ENCODE measurements at regions of chr9 and their contacts with region 1.

Region 1: GRCh38 chr9:107976765-107977164 is 487.2 kb upstream of the KLF4 start:
- DNase-seq: peak; percentile 18 to 82 (median 71)
- ATAC-seq: peak; percentile 77 to 98 (median 94)
- H3K4me3 ChIP-seq: no peak overlapping the region
- H3K27ac ChIP-seq: peak overlapping the region in 1 of 12 donors; percentile 13
- H3K4me1 ChIP-seq: peaks cover 0 to 17% (median 0%) of the 10 kb centered on the region in 12 donors
- H3K27me3 ChIP-seq: no peaks in the 10 kb centered on the region
- CTCF ChIP-seq: no peak
- POLR2A ChIP-seq: no peak

Region 2: GRCh38 chr9:107794259-107794658 is 182.5 kb before region 1 on chr9:
- intact Hi-C with region 1: no loop called
- DNase-seq: no peak
- ATAC-seq: no peak
- H3K4me3 ChIP-seq: no peak overlapping the region
- H3K27ac ChIP-seq: no peak overlapping the region
- H3K4me1 ChIP-seq: peaks cover 0 to 3% (median 0%) of the 10 kb centered on the region in 12 donors
- H3K27me3 ChIP-seq: no peaks in the 10 kb centered on the region
- CTCF ChIP-seq: no peak
- POLR2A ChIP-seq: no peak

Region 3: GRCh38 chr9:107919263-107919662 is 57.5 kb before region 1 on chr9:
- intact Hi-C with region 1: loop called in 1 of 10 experiments (anchors 10 kb)
- DNase-seq: no peak
- ATAC-seq: peak in 2 of 4 donors; percentile 39 to 46
- H3K4me3 ChIP-seq: no peak overlapping the region
- H3K27ac ChIP-seq: no peak overlapping the region
- H3K4me1 ChIP-seq: peaks cover 0 to 4% (median 0%) of the 10 kb centered on the region in 12 donors
- H3K27me3 ChIP-seq: no peaks in the 10 kb centered on the region
- CTCF ChIP-seq: no peak
- POLR2A ChIP-seq: no peak

Region 4: DNA sequence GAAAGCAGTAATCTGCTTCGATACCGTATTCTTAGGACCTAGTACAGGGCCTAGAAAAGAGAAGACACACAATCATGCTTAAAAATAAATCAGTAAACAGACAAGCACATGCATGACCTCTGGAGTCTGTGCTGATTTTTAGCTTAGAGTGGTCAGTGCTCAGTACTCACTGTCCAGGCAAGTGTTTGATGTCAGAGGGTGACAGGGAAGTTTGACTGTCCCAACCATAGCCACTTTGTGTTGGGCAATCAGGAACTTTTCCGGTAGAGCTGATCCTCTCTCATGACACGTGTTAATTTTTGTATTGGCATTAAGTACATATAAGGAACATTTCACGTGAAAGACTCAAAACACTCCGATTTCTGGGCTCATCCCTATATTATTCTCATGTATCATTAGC is 22.5 kb before region 1 on chr9:
- intact Hi-C with region 1: loop called in 1 of 10 experiments (anchors 1 kb)
- DNase-seq: no peak
- ATAC-seq: peak; percentile 24 to 64 (median 46)
- H3K4me3 ChIP-seq: no peak overlapping the region
- H3K27ac ChIP-seq: no peak overlapping the region
- H3K4me1 ChIP-seq: no peaks in the 10 kb centered on the region
- H3K27me3 ChIP-seq: no peaks in the 10 kb centered on the region
- CTCF ChIP-seq: no peak
- POLR2A ChIP-seq: no peak

Measured in heart left ventricle (tissue), 16 donors.